Heart left ventricle (tissue), 16 donors: ENCODE measurements at regions of chr16 and their contacts with region 1.

Region 1: DNA sequence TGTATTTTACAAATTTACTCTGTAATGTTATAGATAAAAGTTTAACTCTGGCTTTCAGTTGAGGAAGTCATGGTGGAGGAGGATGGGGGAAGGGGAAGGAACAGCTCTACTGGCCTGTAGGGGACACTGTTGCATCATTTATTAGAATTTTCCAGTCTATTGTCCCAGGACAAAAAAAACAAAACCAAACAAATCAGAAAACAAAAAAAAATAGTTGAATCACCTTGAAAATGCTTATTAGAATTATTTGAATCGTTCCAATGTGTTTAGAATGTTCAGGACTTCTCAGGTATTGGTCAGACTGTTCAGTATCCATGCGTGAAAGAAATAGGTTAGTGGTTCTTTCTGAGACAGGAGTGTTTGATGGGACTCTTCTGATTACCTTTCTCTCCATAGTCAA is 242.0 kb downstream of the FTO start:
- DNase-seq: no peak
- ATAC-seq: peak in 3 of 4 donors; percentile 60 to 76 (median 71)
- H3K4me3 ChIP-seq: no peak overlapping the region
- H3K27ac ChIP-seq: no peak overlapping the region
- H3K4me1 ChIP-seq: peaks cover 0 to 8% (median 0%) of the 10 kb centered on the region in 12 donors
- H3K27me3 ChIP-seq: no peaks in the 10 kb centered on the region
- CTCF ChIP-seq: peak; percentile 51 to 78 (median 72)
- POLR2A ChIP-seq: no peak

Region 2: DNA sequence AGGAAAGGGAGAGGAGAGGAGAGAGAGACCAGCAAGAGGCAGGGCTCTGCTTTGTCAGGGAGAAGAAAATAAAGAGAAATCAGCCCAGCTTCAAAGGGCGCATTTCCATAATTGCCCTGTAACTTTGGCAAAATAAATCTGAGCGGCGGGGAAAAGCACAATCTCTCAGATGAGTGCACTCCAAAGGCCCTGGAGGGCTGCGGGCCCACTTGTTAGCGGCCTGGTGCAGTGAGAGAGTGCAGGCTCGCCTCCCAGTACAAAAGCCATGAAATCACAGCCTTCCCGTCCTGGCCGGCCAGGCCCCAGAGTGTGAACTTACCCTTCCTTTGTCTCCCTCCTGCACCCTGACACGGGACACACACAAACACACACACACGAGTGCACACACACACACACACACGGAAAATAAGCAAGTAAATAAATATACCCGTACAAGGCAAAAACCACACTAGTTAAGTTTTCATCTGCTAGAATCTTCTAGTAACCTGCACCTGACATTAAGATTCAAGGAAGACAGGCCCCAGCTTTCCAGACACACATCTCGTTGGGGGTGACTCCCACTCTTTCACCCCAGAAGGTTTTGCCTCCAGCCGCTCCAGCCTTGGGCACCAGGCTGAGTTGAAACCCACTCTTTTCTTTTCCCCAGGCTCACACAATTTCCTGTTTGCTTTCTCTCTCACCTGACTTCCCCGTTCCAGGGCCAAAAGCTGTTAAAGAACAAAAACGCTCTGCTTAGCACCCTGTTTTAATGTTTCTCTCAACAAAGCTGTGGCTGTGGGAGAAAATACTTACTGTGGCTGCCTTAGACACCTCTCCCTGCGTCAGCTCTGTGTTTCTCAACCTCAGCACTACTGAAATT is 332.1 kb after region 1 on chr16:
- intact Hi-C with region 1: loop called in 3 of 10 experiments (anchors 10 kb)
- DNase-seq: no peak
- ATAC-seq: no peak
- H3K4me3 ChIP-seq: no peak overlapping the region
- H3K27ac ChIP-seq: no peak overlapping the region
- H3K4me1 ChIP-seq: peaks cover 0 to 10% (median 5%) of the 10 kb centered on the region in 12 donors
- H3K27me3 ChIP-seq: peaks cover 0 to 30% (median 0%) of the 10 kb centered on the region in 9 donors
- CTCF ChIP-seq: no peak
- POLR2A ChIP-seq: no peak